Activated T-helper 1 cell treated with anti-CD3 and anti-CD28 coated beads, Interleukin-12 subunit alpha, Interleukin-12 subunit beta, Interleukin-2, Interleukin-4 antibody, amounts not matched to agents 30 ng/mL and 10 ng/mL and 1 ng/mL, durations not matched to agents 14 hours and 24 hours and 36 hours (primary cell): ENCODE measurements at regions of chr6 and their contacts with region 1.

Region 1: DNA sequence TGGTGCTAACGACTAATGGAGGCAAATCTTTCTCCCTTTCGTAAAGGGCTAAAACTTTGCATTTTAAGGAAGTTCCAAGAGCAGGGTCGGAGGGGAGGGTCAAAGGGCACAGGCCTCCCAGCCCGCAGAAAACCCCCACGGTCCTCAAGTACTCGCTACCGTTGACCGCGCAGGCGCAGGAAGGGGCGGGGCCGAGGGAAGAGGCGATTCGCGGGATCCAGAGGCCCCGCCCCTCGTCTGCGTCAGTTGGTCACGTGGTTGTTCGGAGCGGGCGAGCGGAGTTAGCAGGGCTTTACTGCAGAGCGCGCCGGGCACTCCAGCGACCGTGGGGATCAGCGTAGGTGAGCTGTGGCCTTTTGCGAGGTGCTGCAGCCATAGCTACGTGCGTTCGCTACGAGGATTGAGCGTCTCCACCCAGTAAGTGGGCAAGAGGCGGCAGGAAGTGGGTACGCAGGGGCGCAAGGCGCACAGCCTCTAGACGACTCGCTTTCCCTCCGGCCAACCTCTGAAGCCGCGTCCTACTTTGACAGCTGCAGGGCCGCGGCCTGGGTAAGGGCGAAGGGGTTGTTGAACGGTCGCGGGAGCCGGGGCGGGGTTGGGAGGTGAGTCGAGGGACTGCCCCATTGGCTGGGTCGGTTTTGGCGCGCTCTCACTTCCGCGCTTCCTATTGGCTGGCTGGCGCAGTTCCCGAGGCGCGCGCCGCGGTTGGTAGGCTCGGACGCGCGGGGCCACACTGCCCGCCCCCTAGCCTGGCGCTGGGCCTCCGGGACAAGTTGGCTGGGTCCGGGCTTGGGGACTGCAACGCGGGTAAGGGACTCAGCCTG is at the start of gene GMNN:
- DNase-seq: peak; percentile 96
- H3K4me3 Mint-ChIP-seq: peak within 1 kb of the TSS; percentile 98
- H3K27ac Mint-ChIP-seq: peak within 1 kb of the TSS; percentile 98
- H3K4me1 Mint-ChIP-seq: peaks cover 39% of the 10 kb centered on the region
- H3K27me3 Mint-ChIP-seq: no peaks in the 10 kb centered on the region
- total RNA-seq, gene GMNN: 80.8 and 83.5 TPM in 2 replicates

Region 2: DNA sequence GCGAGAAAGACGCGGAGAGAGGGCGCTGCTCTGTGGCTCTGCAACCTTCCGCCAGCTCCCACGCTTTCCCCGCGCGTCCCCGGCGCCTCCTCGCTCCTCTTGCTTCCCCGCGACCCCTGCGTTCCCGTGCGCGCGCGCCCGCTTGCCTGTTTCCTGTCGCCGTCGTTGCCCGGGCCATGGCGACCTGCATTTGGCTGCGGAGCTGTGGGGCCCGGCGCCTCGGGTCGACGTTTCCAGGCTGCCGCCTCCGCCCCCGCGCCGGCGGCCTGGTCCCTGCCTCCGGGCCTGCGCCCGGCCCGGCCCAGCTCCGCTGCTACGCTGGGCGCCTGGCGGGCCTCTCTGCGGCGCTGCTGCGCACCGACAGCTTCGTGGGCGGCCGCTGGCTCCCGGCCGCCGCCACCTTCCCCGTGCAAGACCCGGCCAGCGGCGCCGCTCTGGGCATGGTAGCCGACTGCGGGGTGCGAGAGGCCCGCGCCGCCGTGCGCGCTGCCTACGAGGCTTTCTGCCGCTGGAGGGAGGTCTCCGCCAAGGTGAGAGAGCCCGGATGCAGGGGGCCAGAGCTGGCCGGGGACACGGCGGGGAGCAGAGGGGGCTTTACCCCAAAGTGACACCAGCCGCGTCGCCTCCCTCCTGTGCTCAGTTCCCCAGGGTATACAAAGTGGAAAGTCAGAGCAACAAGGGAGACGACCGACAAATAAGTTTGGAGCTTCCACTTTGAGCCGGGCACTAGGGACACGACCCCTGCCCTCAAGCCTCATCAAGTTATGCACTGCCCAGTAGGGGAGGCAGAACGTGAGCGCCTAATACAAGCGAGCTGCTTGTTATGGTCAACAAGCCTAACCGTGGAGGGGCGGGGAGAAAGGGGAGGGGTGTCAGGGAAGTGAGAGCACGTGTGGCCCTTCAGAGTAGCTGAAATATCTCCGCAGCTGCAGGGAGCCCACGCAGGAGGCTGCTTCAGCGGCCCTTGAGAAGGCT is 279.8 kb before region 1 on chr6 and contains the start of gene ALDH5A1:
- intact Hi-C with region 1: loop called (anchors 5 kb)
- DNase-seq: peak; percentile 65
- H3K4me3 Mint-ChIP-seq: peak within 1 kb of the TSS; percentile 87
- H3K27ac Mint-ChIP-seq: peak within 1 kb of the TSS; percentile 19
- H3K4me1 Mint-ChIP-seq: peaks cover 21% of the 10 kb centered on the region
- H3K27me3 Mint-ChIP-seq: peaks cover 2% of the 10 kb centered on the region
- total RNA-seq, gene ALDH5A1: 11.3 and 11.9 TPM in 2 replicates

Region 3: GRCh38 chr6:24630856-24631505 is 143.9 kb before region 1 on chr6:
- intact Hi-C with region 1: no loop called
- DNase-seq: no peak
- H3K4me3 Mint-ChIP-seq: no peak overlapping the region
- H3K27ac Mint-ChIP-seq: no peak overlapping the region
- H3K4me1 Mint-ChIP-seq: no peaks in the 10 kb centered on the region
- H3K27me3 Mint-ChIP-seq: peaks cover 26% of the 10 kb centered on the region

Region 4: GRCh38 chr6:24666641-24667377 is 108.1 kb before region 1 on chr6 and contains the starts of genes ACOT13 and TDP2:
- intact Hi-C with region 1: loop called (anchors 1 kb)
- DNase-seq: peak; percentile 97
- H3K4me3 Mint-ChIP-seq: peak within 1 kb of the TSS; percentile 92
- H3K27ac Mint-ChIP-seq: peak within 1 kb of the TSS; percentile 99
- H3K4me1 Mint-ChIP-seq: peaks cover 61% of the 10 kb centered on the region
- H3K27me3 Mint-ChIP-seq: no peaks in the 10 kb centered on the region
- total RNA-seq, gene ACOT13: 27.0 and 27.4 TPM in 2 replicates
- total RNA-seq, gene TDP2: 46.1 and 47.4 TPM in 2 replicates

Region 5: GRCh38 chr6:24743265-24743943 is 31.5 kb before region 1 on chr6:
- intact Hi-C with region 1: loop called (anchors 1 kb)
- DNase-seq: no peak
- H3K4me3 Mint-ChIP-seq: no peak overlapping the region
- H3K27ac Mint-ChIP-seq: peak overlapping the region; percentile 63
- H3K4me1 Mint-ChIP-seq: peaks cover 24% of the 10 kb centered on the region
- H3K27me3 Mint-ChIP-seq: no peaks in the 10 kb centered on the region

Region 6: DNA sequence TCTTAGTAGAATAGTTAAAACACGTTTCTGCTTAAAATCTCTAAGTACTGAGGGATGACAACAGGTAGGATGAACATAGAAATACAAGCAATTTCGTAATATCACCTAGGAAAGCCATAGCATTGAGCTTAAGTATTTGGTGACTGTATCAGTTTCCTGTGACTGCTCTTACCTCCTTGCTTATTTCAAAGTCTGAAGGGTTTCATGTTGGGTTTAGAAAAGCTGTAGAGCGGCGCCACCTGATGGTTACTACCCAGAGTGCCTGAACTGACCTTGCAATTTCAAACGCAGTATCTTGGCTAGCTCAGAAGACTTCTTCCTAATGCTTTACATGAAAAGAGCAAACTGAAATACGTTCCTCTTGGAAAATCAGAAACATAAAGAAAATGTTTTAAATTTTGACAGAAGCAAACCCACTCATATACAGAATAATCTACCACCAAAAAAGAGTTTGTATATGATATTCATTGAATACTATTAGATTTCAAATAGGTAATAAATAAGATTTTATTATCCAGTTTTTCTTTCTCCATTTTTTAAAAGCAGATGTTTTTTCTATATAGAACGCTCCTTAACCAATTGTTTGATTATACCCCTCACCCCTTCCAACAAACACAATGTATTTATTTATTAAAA is 243.1 kb after region 1 on chr6:
- intact Hi-C with region 1: loop called (anchors 2 kb)
- DNase-seq: peak; percentile 70
- H3K4me3 Mint-ChIP-seq: no peak overlapping the region
- H3K27ac Mint-ChIP-seq: no peak overlapping the region
- H3K4me1 Mint-ChIP-seq: peaks cover 50% of the 10 kb centered on the region
- H3K27me3 Mint-ChIP-seq: no peaks in the 10 kb centered on the region